ENCODE measurements at regions of chr10 and their contacts with region 1.

Region 1: GRCh38 chr10:100373298-100374136 is 26.5 kb downstream of the SCD start:
- DNase-seq: peak; percentile 66 to 93 (median 84)
- ATAC-seq: peak; percentile 63
- H3K4me3 ChIP-seq: peak overlapping the region; percentile 74 to 91
- H3K4me3 Mint-ChIP-seq: no peak overlapping the region
- H3K27ac ChIP-seq: peak overlapping the region; percentile 90 to 94
- H3K27ac Mint-ChIP-seq: no peak overlapping the region
- H3K4me1 ChIP-seq: peaks cover 44% of the 10 kb centered on the region
- H3K4me1 Mint-ChIP-seq: peaks cover 31% of the 10 kb centered on the region
- H3K27me3 ChIP-seq: no peaks in the 10 kb centered on the region
- H3K27me3 Mint-ChIP-seq: no peaks in the 10 kb centered on the region
- CTCF ChIP-seq: no peak

Region 2: DNA sequence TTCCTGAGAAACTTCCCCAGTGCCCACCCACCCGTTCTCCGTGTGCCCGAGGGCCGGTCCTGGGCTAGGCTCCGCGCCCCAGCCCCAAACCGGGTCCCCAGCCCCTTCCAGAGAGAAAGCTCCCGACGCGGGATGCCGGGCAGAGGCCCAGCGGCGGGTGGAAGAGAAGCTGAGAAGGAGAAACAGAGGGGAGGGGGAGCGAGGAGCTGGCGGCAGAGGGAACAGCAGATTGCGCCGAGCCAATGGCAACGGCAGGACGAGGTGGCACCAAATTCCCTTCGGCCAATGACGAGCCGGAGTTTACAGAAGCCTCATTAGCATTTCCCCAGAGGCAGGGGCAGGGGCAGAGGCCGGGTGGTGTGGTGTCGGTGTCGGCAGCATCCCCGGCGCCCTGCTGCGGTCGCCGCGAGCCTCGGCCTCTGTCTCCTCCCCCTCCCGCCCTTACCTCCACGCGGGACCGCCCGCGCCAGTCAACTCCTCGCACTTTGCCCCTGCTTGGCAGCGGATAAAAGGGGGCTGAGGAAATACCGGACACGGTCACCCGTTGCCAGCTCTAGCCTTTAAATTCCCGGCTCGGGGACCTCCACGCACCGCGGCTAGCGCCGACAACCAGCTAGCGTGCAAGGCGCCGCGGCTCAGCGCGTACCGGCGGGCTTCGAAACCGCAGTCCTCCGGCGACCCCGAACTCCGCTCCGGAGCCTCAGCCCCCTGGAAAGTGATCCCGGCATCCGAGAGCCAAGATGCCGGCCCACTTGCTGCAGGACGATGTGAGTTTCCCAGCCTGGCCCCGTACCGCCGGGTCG is 26.6 kb before region 1 on chr10 and contains the start of gene SCD:
- CTCF ChIA-PET with region 1: interaction called, 6 read pairs
- POLR2A ChIA-PET with region 1: interaction called, 9 read pairs
- intact Hi-C with region 1: loop called (anchors 1 to 2 kb)
- DNase-seq: peak; percentile 46 to 91 (median 72)
- ATAC-seq: peak; percentile 86
- H3K4me3 ChIP-seq: peak within 1 kb of the TSS; percentile 63 to 79
- H3K4me3 Mint-ChIP-seq: peak within 1 kb of the TSS; percentile 93
- H3K27ac ChIP-seq: peak within 1 kb of the TSS in 1 of 2 experiments; percentile 36
- H3K27ac Mint-ChIP-seq: peak within 1 kb of the TSS; percentile 60
- H3K4me1 ChIP-seq: peaks cover 6% of the 10 kb centered on the region
- H3K4me1 Mint-ChIP-seq: peaks cover 31% of the 10 kb centered on the region
- H3K27me3 ChIP-seq: no peaks in the 10 kb centered on the region
- H3K27me3 Mint-ChIP-seq: no peaks in the 10 kb centered on the region
- CTCF ChIP-seq: no peak
- total RNA-seq, gene SCD: 5.4 TPM

Measured in CD8-positive, alpha-beta T cell (primary cell).